GM18951 (cell line): ENCODE measurements at regions of chr3 and their contacts with region 1.

Region 1: GRCh38 chr3:53180305-53181023 is 19.5 kb downstream of the PRKCD start:
- POLR2A ChIP-seq: peak; percentile 43

Region 2: GRCh38 chr3:52798978-52799476 is 381.4 kb before region 1 on chr3:
- in situ Hi-C with region 1: no loop called
- POLR2A ChIP-seq: no peak

Region 3: GRCh38 chr3:53130179-53131061 is 50.0 kb before region 1 on chr3 and contains the start of gene RFT1:
- in situ Hi-C with region 1: loop called (anchors 10 kb)
- POLR2A ChIP-seq: peak; percentile 92

Region 4: DNA sequence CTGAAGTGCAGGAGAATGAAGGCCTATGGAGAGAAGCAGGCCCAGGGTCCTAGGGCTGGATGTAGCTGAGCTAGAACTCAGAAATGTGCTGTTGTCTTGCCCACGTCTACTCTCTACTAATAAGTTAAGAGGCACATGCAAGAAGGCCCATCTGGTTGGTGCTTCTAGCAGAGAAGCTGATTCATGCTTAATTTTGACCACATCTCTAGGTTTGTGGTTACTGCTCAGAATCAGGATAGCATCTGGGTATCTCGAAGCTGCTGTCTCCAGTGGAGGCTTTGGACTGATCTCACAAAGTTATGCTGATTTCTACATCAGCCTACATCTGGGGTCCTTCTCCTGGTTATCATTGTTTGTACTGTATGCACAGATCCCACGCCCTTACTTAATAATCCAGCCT is 401.2 kb after region 1 on chr3:
- in situ Hi-C with region 1: no loop called
- POLR2A ChIP-seq: no peak